Caco-2 (cell line): ENCODE measurements at regions of chr10 and their contacts with region 1.

Region 1: DNA sequence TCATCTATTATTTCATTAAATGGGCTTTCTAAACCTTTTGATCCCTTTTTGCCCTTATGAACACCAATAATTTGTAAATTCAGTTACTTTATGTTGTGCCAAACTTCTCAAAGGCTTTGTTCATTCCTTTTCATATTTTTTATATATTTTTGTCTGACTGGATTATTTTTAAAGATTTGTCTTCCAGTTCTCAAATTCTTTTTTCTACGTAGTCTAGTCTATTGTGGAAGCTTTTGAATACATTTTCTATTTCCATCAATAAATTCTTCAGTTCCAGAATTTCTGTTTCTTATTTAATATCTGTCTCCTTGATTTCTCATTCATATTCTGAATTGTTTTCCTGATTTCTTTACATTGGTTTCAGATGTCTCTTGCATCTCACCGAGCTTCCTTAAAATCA is 108.2 kb downstream of the CTNNA3 start:
- DNase-seq: no peak
- H3K4me3 ChIP-seq: no peak overlapping the region
- H3K4me3 Mint-ChIP-seq: no peak overlapping the region
- H3K27ac Mint-ChIP-seq: no peak overlapping the region
- H3K4me1 ChIP-seq: no peaks in the 10 kb centered on the region
- H3K4me1 Mint-ChIP-seq: no peaks in the 10 kb centered on the region
- H3K27me3 ChIP-seq: no peaks in the 10 kb centered on the region
- H3K27me3 Mint-ChIP-seq: no peaks in the 10 kb centered on the region
- CTCF ChIP-seq: no peak

Region 2: DNA sequence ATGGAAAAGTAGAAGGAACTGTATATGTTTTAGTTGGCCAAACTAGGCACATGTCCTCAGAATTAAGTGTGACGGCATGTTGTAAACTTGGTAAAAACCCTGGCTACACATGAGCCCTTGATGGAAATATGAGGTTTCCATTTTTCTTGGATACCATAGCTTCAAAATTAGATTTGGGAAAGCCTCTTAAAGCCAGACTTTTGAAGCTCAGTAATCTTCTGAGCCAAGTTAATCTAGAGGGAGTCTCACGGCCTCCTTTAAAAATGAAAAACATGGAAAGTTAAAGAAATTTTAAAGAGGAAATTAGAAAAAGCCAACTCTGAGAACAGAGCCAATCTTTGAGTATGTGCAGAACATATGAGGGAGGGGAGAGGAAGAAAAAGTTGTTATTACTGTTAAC is 267.8 kb before region 1 on chr10:
- CTCF ChIA-PET with region 1: no interaction called
- POLR2A ChIA-PET with region 1: no interaction called
- intact Hi-C with region 1: no loop called
- DNase-seq: no peak
- H3K4me3 ChIP-seq: no peak overlapping the region
- H3K4me3 Mint-ChIP-seq: no peak overlapping the region
- H3K27ac Mint-ChIP-seq: no peak overlapping the region
- H3K4me1 ChIP-seq: no peaks in the 10 kb centered on the region
- H3K4me1 Mint-ChIP-seq: no peaks in the 10 kb centered on the region
- H3K27me3 ChIP-seq: no peaks in the 10 kb centered on the region
- H3K27me3 Mint-ChIP-seq: no peaks in the 10 kb centered on the region
- CTCF ChIP-seq: no peak

Region 3: DNA sequence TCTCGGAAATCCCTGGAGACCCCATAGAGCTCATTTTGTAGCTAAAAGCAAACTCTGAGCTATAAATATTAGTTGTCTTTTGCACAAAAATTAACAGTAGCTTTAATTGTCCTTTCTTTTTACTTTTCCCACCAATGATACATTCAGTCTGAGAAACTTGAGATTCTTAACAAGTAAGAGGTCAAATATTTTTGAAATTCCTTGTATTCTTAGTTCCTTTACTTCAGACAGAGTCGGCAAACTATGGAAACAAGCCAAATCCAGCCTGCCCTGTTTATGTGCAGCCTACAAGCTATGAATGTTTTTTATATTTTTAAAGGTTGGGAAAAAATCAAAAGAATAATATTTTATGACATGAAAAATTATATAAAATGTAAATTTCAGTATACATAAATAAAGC is 38.4 kb before region 1 on chr10:
- CTCF ChIA-PET with region 1: no interaction called
- POLR2A ChIA-PET with region 1: no interaction called
- intact Hi-C with region 1: loop called (anchors 1 kb)
- DNase-seq: no peak
- H3K4me3 ChIP-seq: no peak overlapping the region
- H3K4me3 Mint-ChIP-seq: no peak overlapping the region
- H3K27ac Mint-ChIP-seq: no peak overlapping the region
- H3K4me1 ChIP-seq: no peaks in the 10 kb centered on the region
- H3K4me1 Mint-ChIP-seq: no peaks in the 10 kb centered on the region
- H3K27me3 ChIP-seq: no peaks in the 10 kb centered on the region
- H3K27me3 Mint-ChIP-seq: peaks cover 6% of the 10 kb centered on the region
- CTCF ChIP-seq: no peak

Region 4: DNA sequence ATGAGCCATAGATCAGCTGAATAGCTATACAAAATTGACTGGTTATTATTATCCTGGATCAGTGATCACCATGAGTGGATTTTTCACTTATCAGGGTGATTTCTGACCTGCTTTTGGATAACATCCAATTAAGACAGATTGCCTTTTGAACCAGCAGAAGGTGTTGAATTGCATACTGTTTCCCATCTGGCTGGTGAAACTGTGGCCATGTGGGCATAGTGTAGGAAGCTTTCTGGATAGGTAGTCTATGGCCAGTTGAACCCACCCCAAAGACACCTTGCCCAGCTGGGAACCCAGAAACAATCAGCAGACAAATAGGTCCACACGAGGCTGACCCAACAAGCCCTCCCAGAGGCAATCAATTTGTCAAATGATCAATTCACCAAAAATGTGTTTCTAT is 220.9 kb after region 1 on chr10:
- CTCF ChIA-PET with region 1: no interaction called
- POLR2A ChIA-PET with region 1: no interaction called
- intact Hi-C with region 1: no loop called
- DNase-seq: no peak
- H3K4me3 ChIP-seq: no peak overlapping the region
- H3K4me3 Mint-ChIP-seq: no peak overlapping the region
- H3K27ac Mint-ChIP-seq: no peak overlapping the region
- H3K4me1 ChIP-seq: peaks cover 9% of the 10 kb centered on the region
- H3K4me1 Mint-ChIP-seq: peaks cover 8% of the 10 kb centered on the region
- H3K27me3 ChIP-seq: no peaks in the 10 kb centered on the region
- H3K27me3 Mint-ChIP-seq: no peaks in the 10 kb centered on the region
- CTCF ChIP-seq: no peak